ENCODE measurements at regions of chr2 and their contacts with region 1.

Region 1: DNA sequence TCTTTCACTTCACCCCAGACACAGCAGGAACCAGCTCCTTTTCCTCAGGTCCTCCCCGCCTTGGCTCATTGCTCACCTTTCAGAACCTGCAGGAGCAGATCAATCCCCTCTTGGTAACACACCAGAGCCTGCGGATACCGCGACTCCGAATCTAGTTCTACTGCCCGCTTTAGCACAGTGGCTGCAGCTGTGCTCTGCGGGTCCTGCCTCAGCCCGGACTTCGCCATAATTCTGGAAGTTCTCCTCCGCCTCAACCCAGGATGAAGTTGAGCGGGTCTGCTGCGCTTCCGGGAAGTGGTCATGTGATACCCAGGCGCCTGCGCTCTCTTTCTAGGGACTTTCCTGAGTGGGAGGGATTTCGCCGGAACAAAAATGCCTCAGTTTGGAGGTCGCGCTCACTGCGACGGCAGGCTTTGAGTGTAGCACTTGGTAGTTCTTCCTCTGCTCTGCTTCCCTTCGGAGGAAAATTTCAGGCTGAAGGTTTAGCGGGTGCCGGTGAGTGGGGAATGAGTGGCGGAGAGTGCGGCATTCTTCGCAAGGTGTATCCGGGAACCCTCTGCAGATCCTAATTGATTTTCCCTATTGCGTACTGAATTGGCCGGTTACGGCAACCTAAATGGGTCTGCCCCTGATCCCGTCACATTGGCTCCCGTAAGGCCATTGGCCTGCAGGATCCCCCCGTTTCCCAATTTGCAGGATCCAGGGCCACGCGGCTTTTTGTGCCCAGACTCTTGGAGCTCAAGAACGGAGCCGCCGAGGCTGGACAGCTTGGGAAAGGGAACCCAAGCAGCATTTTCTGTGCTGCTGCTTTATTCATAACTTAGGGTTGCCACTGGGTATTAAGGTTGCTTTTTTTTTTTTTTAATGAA is at the starts of genes MITD1 and MRPL30:
- DNase-seq: peak; percentile 96
- H3K4me3 ChIP-seq: peak within 1 kb of the TSS; percentile 61 to 81 (median 77)
- H3K27ac ChIP-seq: peak within 1 kb of the TSS; percentile 76 to 81 (median 78)
- H3K4me1 ChIP-seq: peaks cover 0 to 38% (median 34%) of the 10 kb centered on the region in 4 donors
- H3K27me3 ChIP-seq: no peaks in the 10 kb centered on the region
- CTCF ChIP-seq: no peak
- EP300 ChIP-seq: no peak
- POLR2A ChIP-seq: peak in 1 of 2 donors; percentile 34
- total RNA-seq, gene MITD1: 18.3 to 30.9 (median 23.5) TPM
- total RNA-seq, gene MRPL30: 36.4 to 40.5 (median 38.1) TPM

Region 2: GRCh38 chr2:99154643-99155536 is 26.1 kb before region 1 on chr2 and contains the starts of genes LIPT1 and TSGA10:
- intact Hi-C with region 1: loop called (anchors 2 kb)
- DNase-seq: peak; percentile 97
- H3K4me3 ChIP-seq: peak within 1 kb of the TSS; percentile 61 to 85 (median 66)
- H3K27ac ChIP-seq: peak within 1 kb of the TSS; percentile 83 to 91 (median 84)
- H3K4me1 ChIP-seq: peaks cover 0 to 19% (median 18%) of the 10 kb centered on the region in 4 donors
- H3K27me3 ChIP-seq: no peaks in the 10 kb centered on the region
- CTCF ChIP-seq: no peak
- EP300 ChIP-seq: peak in 1 of 4 donors; percentile 96
- POLR2A ChIP-seq: peak; percentile 68 to 78
- total RNA-seq, gene LIPT1: 4.8 to 9.5 (median 7.4) TPM
- total RNA-seq, gene TSGA10: 1.4 to 8.4 (median 3.8) TPM